ENCODE measurements at regions of chr19 and their contacts with region 1.

Region 1: DNA sequence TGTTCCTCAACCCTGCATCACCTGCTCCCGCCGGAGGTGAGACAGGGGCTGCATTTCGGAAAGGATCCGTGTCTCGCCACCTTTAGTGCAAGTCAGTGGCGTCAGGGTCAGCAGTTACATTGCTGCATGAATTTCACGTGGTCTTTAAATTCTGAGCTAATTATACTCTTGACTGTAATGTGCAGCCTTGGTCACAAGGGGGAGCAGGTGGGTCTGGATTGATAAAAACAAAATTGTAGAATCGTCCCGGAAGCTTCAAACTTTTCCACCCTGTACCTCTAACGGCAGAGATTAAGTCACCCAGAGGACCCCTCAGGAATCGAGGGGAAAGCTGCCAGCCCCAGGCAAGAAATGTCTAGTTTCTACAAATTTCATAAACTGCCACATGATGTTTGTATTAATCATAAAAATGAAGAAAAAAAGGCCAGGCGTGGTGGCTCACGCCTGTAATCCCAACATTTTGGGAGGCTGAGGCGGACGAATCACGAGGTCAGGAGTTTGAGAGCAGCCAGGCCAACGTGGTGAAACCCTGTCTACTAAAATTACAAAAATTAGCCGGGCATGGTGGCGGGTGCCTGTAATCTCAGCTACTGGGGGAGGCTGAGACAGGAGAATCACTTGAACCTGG is 20.2 kb downstream of the BBC3 start:
- DNase-seq: peak; percentile 82
- ATAC-seq: peak; percentile 58
- H3K4me3 Mint-ChIP-seq: no peak overlapping the region
- H3K27ac Mint-ChIP-seq: peak overlapping the region; percentile 98
- H3K4me1 Mint-ChIP-seq: peaks cover 20% of the 10 kb centered on the region
- H3K27me3 Mint-ChIP-seq: no peaks in the 10 kb centered on the region
- CTCF ChIP-seq: peak; percentile 82

Region 2: DNA sequence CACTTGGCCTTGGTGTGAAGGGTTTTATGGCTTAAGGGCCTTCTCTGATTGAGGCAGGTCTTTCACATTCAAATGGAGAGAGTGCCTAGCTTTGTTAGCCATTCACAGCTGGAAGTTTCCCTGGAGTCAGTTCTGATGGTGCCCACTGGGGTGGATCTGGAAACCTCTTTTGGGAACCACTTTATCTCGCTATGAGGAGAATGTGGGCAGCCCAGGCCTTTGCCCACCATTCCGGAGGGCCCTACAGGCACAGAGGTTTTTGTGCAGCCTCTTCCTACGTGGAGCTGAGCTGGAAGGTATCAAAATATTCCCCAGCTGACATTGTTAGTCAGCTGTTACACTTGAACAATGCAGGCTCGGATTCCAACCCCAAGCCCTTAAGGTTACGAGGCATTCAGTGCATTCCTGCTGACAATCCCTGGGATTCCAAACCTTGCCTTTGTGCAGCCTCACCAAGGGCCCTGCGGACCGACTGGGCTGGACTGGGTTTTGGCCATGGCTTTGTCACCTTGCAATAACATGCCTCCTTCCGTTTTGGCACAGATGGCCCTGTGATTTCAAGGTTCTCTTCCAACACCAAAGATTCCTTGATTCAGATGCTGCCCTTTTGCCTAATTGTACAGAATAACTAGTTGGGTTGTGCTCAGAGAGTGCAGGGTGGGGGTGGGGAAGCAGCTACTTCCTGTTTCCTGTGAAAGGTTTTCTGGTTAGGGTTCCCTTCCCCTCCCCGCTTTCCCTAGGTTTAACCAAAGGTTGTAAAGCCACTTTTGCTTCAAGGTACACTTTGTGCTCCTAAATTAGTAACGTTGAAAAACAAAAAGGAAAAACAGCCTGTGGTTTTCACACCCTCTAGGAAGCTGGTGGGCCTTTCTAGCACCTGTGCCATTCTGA is 53.1 kb before region 1 on chr19:
- CTCF ChIA-PET with region 1: interaction called, 20 read pairs
- POLR2A ChIA-PET with region 1: no interaction called
- DNase-seq: peak; percentile 72
- ATAC-seq: peak; percentile 92
- H3K4me3 Mint-ChIP-seq: peak overlapping the region; percentile 51
- H3K27ac Mint-ChIP-seq: peak overlapping the region; percentile 99
- H3K4me1 Mint-ChIP-seq: peaks cover 43% of the 10 kb centered on the region
- H3K27me3 Mint-ChIP-seq: no peaks in the 10 kb centered on the region
- CTCF ChIP-seq: no peak

Region 3: DNA sequence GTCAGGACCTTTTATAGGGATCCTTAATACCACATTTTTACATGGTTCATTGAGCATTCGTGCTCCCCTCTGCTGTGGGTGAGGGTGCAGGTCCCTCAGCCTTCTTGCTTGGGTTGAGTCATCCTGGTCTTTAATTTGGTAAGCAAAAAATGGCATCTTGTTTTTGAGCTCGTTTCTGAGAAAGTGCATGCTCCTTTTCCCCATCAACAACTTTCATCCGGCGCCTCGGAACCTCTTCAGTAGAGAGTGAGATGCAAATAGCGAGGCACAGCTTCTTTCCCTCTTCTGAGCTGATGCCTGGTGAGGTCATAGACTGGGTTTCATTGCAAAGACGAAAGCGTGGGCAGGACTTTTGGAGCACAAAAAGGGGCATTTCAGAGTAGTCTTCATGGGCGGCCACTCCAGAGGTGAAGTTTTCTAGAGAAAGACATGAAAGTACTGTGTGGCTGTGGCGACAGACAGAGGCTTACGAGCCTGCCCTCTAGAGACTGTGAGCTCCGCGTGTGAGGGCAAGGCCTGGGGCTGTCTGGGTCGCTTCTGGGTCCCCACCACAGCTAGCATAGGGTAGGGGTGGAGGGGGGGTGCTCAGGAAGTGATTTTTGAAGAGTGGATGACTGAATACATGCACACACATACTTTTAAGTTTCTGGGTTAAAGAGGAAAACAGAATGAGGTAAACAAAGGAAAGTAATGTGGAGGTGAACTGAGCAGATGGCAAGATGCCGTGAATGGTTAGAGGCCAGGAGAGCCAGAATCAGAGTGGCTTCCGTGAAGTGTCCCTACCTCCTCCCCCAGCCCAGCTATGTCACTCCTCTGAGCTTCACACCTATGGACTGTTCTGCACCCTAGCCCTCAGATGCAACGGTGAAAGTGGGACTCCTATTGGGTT is 24.1 kb before region 1 on chr19:
- CTCF ChIA-PET with region 1: interaction called, 13 read pairs
- POLR2A ChIA-PET with region 1: no interaction called
- DNase-seq: no peak
- ATAC-seq: peak; percentile 49
- H3K4me3 Mint-ChIP-seq: no peak overlapping the region
- H3K27ac Mint-ChIP-seq: peak overlapping the region; percentile 50
- H3K4me1 Mint-ChIP-seq: peaks cover 13% of the 10 kb centered on the region; the same call in 1 of the 2 replicates
- H3K27me3 Mint-ChIP-seq: no peaks in the 10 kb centered on the region
- CTCF ChIP-seq: no peak

Region 4: DNA sequence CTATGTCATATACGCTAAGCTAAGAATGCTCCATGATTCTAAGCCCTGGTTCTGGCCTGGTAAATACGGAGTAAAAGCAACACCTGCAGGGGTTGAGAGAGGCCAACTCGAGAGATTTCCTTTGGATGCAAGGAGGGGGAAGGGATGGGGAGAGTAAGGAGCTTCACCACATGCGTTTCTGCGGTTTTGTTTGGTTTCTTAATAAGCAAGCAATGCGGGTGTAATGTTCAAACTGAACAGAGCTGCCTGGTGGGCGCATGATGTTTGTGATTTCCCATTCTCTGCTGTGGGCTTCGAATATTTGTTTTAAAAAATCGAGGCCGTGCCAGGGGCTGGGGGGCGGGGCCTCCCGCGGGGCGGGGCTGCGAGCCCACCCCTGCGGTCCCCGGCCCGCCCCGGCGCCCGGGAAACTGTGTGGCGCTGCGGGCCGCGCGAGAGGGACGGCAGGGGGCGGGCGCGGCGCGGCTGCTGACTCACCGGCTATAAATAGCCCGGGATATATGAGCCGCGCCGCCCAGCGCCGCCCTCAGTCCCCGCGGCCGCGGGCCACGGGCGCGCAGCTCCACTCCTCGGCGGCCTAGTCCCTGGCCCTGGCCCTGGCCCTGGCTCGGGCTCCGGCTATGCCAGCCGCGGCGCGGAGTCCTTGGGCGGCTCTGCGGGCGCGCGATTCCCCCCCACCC is 15.1 kb after region 1 on chr19:
- CTCF ChIA-PET with region 1: interaction called, 79 read pairs
- POLR2A ChIA-PET with region 1: interaction called, 29 read pairs
- DNase-seq: peak; percentile 84
- ATAC-seq: peak; percentile 18
- H3K4me3 Mint-ChIP-seq: peak overlapping the region; percentile 43
- H3K27ac Mint-ChIP-seq: peak overlapping the region; percentile 95
- H3K4me1 Mint-ChIP-seq: peaks cover 16% of the 10 kb centered on the region
- H3K27me3 Mint-ChIP-seq: no peaks in the 10 kb centered on the region; the same call in 1 of the 2 replicates
- CTCF ChIP-seq: no peak

Region 5: DNA sequence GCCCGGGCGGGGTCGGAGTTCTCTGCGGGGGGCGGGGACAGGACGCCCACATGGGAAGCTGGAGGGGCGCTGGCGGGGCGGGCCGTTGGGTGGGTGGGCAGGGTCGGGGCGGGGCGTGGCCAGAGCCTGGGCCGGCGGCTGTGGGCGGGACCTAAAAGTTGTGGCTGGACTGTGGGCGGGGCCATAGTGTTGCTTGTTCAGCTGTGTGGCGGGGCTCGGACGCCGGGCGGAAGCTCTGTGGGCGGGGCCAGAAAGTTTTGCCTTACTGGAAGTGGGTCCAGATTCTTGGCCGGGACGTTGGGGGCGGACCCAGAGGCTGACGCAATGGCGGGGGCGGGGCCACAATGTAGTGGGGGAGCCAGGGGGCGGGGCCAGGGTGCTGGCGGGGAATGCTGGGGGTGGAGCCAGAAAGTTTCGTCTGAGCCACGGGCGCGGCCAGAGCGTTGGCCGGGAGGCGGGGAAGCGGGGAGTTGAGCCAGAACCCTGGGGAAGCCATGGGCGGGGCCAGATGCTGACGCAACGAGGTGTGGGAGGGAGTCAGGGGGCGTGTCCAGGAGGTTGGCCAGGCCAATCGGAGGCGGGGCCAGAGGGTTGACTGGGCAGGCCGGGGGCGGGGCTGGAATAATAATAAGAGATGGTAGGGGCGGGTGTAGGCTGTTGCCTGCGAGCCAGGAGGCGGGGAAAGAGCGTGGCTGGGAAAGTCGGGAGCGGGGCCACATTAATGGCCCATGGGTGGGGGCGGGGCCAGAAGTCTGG is 46.1 kb after region 1 on chr19:
- CTCF ChIA-PET with region 1: interaction called, 15 read pairs
- POLR2A ChIA-PET with region 1: interaction called, 9 read pairs
- DNase-seq: peak; percentile 100
- ATAC-seq: peak; percentile 86
- H3K4me3 Mint-ChIP-seq: peak overlapping the region; percentile 87
- H3K27ac Mint-ChIP-seq: peak overlapping the region; percentile 97
- H3K4me1 Mint-ChIP-seq: peaks cover 12% of the 10 kb centered on the region
- H3K27me3 Mint-ChIP-seq: peaks cover 19% of the 10 kb centered on the region
- CTCF ChIP-seq: no peak

Region 6: GRCh38 chr19:47436712-47437401 is 226.1 kb after region 1 on chr19:
- CTCF ChIA-PET with region 1: no interaction called
- POLR2A ChIA-PET with region 1: no interaction called
- DNase-seq: peak; percentile 90
- ATAC-seq: peak; percentile 90
- H3K4me3 Mint-ChIP-seq: no peak overlapping the region
- H3K27ac Mint-ChIP-seq: peak overlapping the region; percentile 66
- H3K4me1 Mint-ChIP-seq: peaks cover 8% of the 10 kb centered on the region
- H3K27me3 Mint-ChIP-seq: peaks cover 15% of the 10 kb centered on the region
- CTCF ChIP-seq: peak; percentile 92